Panc1 (cell line): ENCODE measurements at regions of chr1 and their contacts with region 1.

Region 1: GRCh38 chr1:235357485-235358378 is 9.5 kb upstream of the TBCE start:
- DNase-seq: no peak
- ATAC-seq: peak; percentile 33; the same call in 1 of the 2 replicates
- H3K4me3 ChIP-seq: no peak overlapping the region
- H3K27ac ChIP-seq: peak overlapping the region; percentile 36; the same call in 1 of the 2 replicates
- H3K4me1 ChIP-seq: peaks cover 4% of the 10 kb centered on the region; the same call in 1 of the 2 replicates
- H3K27me3 ChIP-seq: no peaks in the 10 kb centered on the region
- CTCF ChIP-seq: no peak

Region 2: GRCh38 chr1:235391874-235392273 is 34.1 kb after region 1 on chr1:
- CTCF ChIA-PET with region 1: no interaction called
- POLR2A ChIA-PET with region 1: interaction called, 11 read pairs
- in situ Hi-C with region 1: no loop called
- intact Hi-C with region 1: no loop called
- DNase-seq: no peak
- ATAC-seq: peak; percentile 67
- H3K4me3 ChIP-seq: no peak overlapping the region
- H3K27ac ChIP-seq: peak overlapping the region; percentile 48
- H3K4me1 ChIP-seq: peaks cover 24% of the 10 kb centered on the region; the same call in 1 of the 2 replicates
- H3K27me3 ChIP-seq: no peaks in the 10 kb centered on the region
- CTCF ChIP-seq: no peak

Region 3: DNA sequence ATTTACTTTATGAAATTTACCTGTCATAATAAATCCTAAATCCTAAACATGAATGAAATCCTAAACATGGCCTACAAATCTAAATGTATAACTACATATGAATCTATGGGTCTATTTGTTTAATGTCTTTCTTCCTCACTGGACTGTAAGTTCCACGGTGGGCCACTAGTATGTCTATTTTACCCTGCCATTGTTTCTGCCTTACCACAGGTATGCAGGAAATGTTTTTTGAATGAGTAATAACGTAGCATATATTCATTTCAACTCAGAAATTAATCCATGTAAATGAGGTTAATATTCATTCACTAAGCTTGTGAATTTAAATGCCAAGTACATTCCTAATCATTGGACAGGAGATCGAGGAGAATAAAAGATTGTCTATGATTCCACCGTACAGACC is 111.2 kb after region 1 on chr1:
- CTCF ChIA-PET with region 1: no interaction called
- POLR2A ChIA-PET with region 1: no interaction called
- in situ Hi-C with region 1: no loop called
- intact Hi-C with region 1: no loop called
- DNase-seq: peak; percentile 50
- ATAC-seq: peak; percentile 83
- H3K4me3 ChIP-seq: no peak overlapping the region
- H3K27ac ChIP-seq: no peak overlapping the region
- H3K4me1 ChIP-seq: peaks cover 6% of the 10 kb centered on the region; the same call in 1 of the 2 replicates
- H3K27me3 ChIP-seq: no peaks in the 10 kb centered on the region
- CTCF ChIP-seq: no peak